ENCODE measurements at regions of chr10 and their contacts with region 1.

Region 1: DNA sequence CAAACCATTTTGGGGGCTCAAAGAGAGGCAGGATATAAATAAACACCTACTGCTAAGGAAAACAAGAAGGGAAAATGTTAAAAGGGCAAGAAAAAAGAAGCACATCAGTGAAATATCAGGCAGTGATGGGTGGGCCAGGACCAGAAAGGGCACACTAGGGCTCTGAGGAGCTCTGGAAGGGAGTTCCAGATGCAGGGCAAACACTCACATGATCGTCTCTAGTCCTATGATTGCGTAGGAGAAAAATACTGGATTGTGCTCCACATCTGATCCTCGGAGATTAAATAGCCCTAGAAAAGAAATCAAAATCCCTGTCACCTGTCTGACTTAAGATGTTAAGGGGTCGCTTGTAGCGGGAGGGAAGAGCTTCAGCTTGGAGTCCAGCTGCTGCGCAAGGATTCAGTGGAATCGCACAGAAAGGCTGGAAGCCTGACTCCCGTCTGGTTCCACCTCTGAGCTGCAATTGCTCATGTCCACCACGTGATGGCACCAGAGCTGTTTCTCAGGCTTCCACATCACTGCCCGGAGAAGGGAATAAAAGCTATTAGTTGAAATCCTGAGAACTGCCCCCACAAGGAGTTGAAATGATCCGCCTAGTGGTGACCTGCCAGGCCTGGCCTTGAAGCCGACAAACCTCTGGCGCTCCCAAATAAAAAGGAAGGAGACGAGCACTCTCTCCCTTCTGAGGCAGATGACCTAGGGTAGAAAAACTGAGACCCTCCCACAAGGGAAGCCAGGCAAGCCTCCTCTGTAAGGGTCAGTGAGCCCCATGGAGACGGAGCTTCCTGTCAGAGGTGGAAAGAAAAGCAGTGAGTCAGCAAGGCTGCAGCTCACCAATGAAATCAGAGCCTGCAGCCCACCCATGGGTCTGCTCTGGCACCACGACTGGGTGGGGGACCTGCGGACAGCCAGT is 39.2 kb downstream of the XPNPEP1 start:
- DNase-seq: peak; percentile 80 to 86 (median 81)
- H3K4me3 ChIP-seq: no peak overlapping the region
- H3K27ac ChIP-seq: peak overlapping the region in 1 of 2 donors; percentile 58
- H3K4me1 ChIP-seq: peaks cover 3% of the 10 kb centered on the region
- H3K27me3 ChIP-seq: no peaks in the 10 kb centered on the region
- CTCF ChIP-seq: peak; percentile 94 to 98 (median 97)
- EP300 ChIP-seq: no peak
- POLR2A ChIP-seq: no peak

Region 2: DNA sequence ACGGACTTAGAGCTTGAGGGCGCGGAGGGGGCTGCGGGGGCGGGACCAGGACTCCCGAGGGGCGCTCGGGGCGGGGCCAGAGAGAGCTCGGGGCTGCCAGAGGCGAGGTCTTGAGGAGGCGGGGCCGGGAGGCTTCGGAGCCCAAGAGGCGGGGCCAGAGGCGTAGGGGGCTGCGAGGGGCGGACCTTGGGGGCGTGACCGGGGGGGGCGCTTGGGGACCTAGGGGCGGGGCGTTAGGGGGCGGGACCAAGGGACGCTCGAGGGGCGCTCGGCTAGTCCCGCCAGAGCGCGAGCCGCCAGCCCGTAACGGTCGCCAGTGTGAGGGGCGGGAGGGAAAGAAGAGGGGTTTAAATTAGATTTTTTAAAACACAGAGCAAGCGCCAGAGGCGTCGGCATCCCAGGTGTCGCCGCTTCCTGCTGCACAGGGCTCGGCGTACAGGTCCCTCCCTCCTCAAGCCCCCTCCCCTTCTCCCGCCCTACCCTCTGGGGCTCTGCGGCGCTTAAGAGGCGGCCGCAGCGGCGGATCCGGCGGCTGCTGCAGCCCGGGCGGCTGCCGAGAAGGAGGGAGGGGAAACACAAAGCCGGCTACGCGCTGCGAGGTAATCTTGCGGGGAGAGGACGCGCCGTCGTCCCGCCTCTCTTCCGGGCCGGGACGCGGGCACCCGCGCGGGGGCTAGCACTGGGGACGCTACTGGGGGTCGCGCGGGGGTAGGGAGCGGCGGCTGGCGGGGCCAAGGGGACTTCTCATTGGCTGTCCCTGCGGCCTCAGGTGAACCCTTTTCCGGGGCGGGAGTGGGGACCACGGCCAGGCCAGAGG is 123.8 kb after region 1 on chr10 and contains the start of gene ADD3:
- intact Hi-C with region 1: loop called in 2 of 4 experiments (anchors 10 kb)
- DNase-seq: peak; percentile 98 to 99 (median 99)
- H3K4me3 ChIP-seq: peak within 1 kb of the TSS; percentile 100
- H3K27ac ChIP-seq: peak within 1 kb of the TSS; percentile 79 to 93
- H3K4me1 ChIP-seq: peaks cover 2% of the 10 kb centered on the region
- H3K27me3 ChIP-seq: no peaks in the 10 kb centered on the region
- CTCF ChIP-seq: no peak
- EP300 ChIP-seq: no peak
- POLR2A ChIP-seq: peak; percentile 31
- total RNA-seq, gene ADD3: 65.3 to 110 (median 85.5) TPM

Region 3: GRCh38 chr10:110016039-110016438 is 131.9 kb after region 1 on chr10:
- intact Hi-C with region 1: loop called in 1 of 4 experiments (anchors 10 kb)
- DNase-seq: no peak
- H3K4me3 ChIP-seq: no peak overlapping the region
- H3K27ac ChIP-seq: no peak overlapping the region
- H3K4me1 ChIP-seq: peaks cover 8% of the 10 kb centered on the region
- H3K27me3 ChIP-seq: no peaks in the 10 kb centered on the region
- CTCF ChIP-seq: no peak
- EP300 ChIP-seq: no peak
- POLR2A ChIP-seq: no peak

Region 4: GRCh38 chr10:110285501-110285900 is 401.4 kb after region 1 on chr10:
- intact Hi-C with region 1: loop called in 1 of 4 experiments (anchors 10 kb)
- DNase-seq: no peak
- H3K4me3 ChIP-seq: no peak overlapping the region
- H3K27ac ChIP-seq: no peak overlapping the region
- H3K4me1 ChIP-seq: peaks cover 3% of the 10 kb centered on the region
- H3K27me3 ChIP-seq: no peaks in the 10 kb centered on the region
- CTCF ChIP-seq: no peak
- EP300 ChIP-seq: no peak
- POLR2A ChIP-seq: no peak

Measured in ovary (tissue), 10 donors.